ENCODE measurements at regions of chr7 and their contacts with region 1.

Region 1: GRCh38 chr7:127514499-127514898 is 70.9 kb downstream of the GCC1 start:
- DNase-seq: peak; percentile 11
- H3K4me3 ChIP-seq: no peak overlapping the region
- H3K27ac ChIP-seq: no peak overlapping the region
- H3K4me1 ChIP-seq: no peaks in the 10 kb centered on the region
- H3K27me3 ChIP-seq: no peaks in the 10 kb centered on the region
- CTCF ChIP-seq: peak; percentile 22 to 60

Region 2: DNA sequence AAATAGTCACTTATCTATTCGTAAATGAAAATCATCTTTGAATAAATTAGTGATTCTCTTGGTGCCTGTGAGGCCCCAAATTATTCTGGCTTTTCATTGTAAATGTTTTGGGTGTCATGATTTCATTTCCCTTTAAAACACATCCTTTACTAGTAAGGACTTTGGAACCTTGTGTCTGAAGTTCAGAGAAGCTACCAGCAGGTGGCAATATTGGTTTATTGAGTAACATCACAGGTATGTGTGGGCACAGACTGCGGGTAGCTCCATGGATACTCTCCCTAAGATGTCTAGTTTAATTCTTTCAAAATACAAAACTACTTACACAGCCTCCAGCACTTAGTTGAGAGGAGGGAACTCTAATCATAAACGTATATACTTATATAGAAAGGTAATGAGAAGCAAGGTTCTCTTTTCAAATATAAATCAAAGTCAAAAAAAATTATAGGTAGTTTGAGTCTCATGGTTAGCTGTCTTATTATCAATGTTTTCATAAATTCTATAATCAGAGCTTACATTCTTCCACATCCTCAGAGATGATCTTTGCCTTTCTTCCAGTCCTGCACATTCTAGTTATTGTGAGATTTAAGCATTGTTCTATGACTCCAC is 711.3 kb before region 1 on chr7:
- CTCF ChIA-PET with region 1: no interaction called
- dilution Hi-C with region 1: no loop called
- in situ Hi-C with region 1: loop called in 1 of 2 experiments (anchors 25 kb)
- intact Hi-C with region 1: loop called (anchors 1 kb)
- DNase-seq: peak; percentile 59
- H3K4me3 ChIP-seq: no peak overlapping the region
- H3K27ac ChIP-seq: no peak overlapping the region
- H3K4me1 ChIP-seq: peaks cover 3% of the 10 kb centered on the region
- H3K27me3 ChIP-seq: no peaks in the 10 kb centered on the region
- CTCF ChIP-seq: peak; percentile 53 to 80

Region 3: DNA sequence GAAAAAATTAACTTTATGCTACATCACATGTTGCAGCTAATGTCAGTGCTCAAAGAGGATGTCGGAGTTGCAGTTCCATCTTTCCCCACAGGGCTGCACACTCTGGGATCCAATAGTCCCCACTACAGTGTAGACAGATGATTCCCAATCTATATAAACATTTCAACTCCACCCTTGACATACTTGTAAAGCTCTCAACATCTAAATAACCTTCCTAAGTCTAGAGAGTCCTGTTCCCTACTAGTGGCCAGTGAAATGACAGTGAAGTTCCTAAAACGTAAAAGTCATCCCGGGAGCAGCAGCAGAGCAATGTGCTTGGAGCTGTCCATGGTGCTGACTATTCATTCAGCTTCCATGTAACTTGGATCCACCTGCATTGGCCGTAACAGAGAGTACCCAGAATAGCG is 406.9 kb before region 1 on chr7:
- CTCF ChIA-PET with region 1: interaction called, 14 read pairs
- dilution Hi-C with region 1: no loop called
- in situ Hi-C with region 1: no loop called
- intact Hi-C with region 1: loop called (anchors 1 kb)
- DNase-seq: peak; percentile 59
- H3K4me3 ChIP-seq: no peak overlapping the region
- H3K27ac ChIP-seq: no peak overlapping the region
- H3K4me1 ChIP-seq: no peaks in the 10 kb centered on the region
- H3K27me3 ChIP-seq: no peaks in the 10 kb centered on the region
- CTCF ChIP-seq: peak; percentile 61 to 62

Region 4: GRCh38 chr7:127208351-127208750 is 306.1 kb before region 1 on chr7:
- CTCF ChIA-PET with region 1: no interaction called
- dilution Hi-C with region 1: no loop called
- in situ Hi-C with region 1: no loop called
- intact Hi-C with region 1: no loop called
- DNase-seq: no peak
- H3K4me3 ChIP-seq: no peak overlapping the region
- H3K27ac ChIP-seq: no peak overlapping the region
- H3K4me1 ChIP-seq: no peaks in the 10 kb centered on the region
- H3K27me3 ChIP-seq: no peaks in the 10 kb centered on the region
- CTCF ChIP-seq: no peak

Region 5: GRCh38 chr7:127347567-127348246 is 166.8 kb before region 1 on chr7:
- CTCF ChIA-PET with region 1: interaction called, 13 read pairs
- dilution Hi-C with region 1: no loop called
- in situ Hi-C with region 1: no loop called
- intact Hi-C with region 1: loop called (anchors 5 kb)
- DNase-seq: peak; percentile 51
- H3K4me3 ChIP-seq: peak overlapping the region in 2 of 3 experiments; percentile 44 to 49
- H3K27ac ChIP-seq: no peak overlapping the region
- H3K4me1 ChIP-seq: peaks cover 8% of the 10 kb centered on the region
- H3K27me3 ChIP-seq: no peaks in the 10 kb centered on the region
- CTCF ChIP-seq: peak; percentile 37 to 47

Measured in mammary epithelial cell (primary cell).